ENCODE measurements at regions of chr15 and their contacts with region 1.

Region 1: GRCh38 chr15:53251996-53252395 is 461.9 kb upstream of the ONECUT1 start:
- DNase-seq: no peak
- CTCF ChIP-seq: no peak

Region 2: DNA sequence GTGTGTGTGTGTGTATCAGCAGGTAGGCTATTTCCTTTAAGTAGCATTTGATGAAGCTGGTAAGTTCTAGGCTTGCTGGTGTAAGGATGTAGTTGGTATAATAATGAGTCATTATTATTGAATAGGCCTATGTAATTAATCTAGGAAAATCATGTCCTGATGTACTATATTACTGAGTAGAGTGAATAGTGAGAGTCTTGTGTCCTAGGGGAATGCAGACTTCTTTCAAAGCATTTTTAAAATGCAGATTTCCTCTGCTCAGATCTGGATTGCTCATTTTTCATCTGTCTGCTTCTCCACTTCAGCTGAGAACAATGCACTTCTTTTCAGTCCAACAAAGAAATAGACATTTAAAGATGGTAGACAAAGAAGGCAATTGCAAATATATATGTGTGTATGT is 27.6 kb before region 1 on chr15:
- CTCF ChIA-PET with region 1: no interaction called
- POLR2A ChIA-PET with region 1: no interaction called
- DNase-seq: no peak
- CTCF ChIP-seq: no peak

Region 3: DNA sequence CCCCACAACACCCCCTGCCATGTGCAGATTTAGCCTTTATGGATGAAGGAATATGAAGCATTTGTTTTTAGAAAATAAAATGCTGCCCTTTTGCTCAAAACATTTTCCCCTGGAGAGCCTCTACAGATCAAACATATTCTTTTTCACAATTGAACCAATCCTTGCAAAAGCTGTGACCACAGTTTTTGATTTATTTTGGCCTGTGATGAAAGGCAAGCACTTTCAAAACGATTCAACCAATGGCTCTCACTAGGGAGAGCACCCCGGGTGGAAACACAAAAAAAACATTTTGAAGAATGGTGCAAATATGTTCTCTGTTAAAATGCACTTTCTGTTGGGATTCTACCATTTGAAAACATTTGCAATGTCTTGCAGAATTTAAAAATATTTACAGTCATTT is 14.2 kb after region 1 on chr15:
- CTCF ChIA-PET with region 1: interaction called, 10 read pairs
- POLR2A ChIA-PET with region 1: no interaction called
- DNase-seq: no peak
- CTCF ChIP-seq: no peak

Measured in GM10248 (cell line).